Pancreas (tissue), 10 donors: ENCODE measurements at regions of chr1 and their contacts with region 1.

Region 1: DNA sequence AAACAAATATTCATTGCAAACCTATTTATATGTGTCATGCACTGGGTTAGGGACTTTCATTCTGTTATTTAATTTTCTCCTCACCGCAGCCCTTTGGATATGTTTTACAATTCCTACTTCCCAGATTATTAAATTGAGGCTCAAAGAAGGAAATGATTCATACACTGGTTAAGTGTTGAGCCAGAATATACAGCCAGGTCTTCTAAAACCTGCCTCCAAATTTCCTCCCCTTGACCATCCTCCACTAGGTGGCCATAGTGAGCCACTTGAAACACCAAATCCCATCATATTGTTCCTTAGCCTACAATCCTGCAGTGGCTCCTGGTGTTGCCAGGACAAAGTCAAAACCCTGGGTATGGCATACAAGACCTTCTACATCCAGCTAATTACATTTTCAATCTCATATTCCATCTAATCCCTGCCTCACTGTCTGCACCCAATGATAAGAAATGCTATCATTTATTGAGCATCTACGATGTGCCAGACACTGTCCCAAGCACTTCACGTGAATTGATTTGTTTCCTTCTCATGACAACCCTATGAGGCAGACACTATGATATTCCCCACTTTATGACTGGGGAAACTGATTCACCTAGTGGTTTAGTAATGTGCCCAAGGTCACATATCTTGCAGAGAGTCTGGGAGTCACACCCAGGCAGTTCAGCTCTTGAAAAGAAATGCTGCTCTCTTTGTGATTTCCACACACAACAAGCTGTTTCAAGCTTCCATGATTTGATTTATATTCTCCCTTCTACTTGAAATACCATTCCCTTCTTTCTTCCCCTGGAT is 23.6 kb upstream of the KIRREL1 start:
- DNase-seq: peak in 1 of 6 donors; percentile 30
- ATAC-seq: peak in 3 of 4 donors; percentile 27 to 68 (median 58)
- H3K4me3 ChIP-seq: no peak overlapping the region
- H3K27ac ChIP-seq: peak overlapping the region in 2 of 4 donors; percentile 25 to 53
- H3K4me1 ChIP-seq: peaks cover 0 to 15% (median 13%) of the 10 kb centered on the region in 3 donors
- H3K27me3 ChIP-seq: no peaks in the 10 kb centered on the region
- CTCF ChIP-seq: peak in 3 of 4 donors; percentile 25 to 43 (median 40)

Region 2: GRCh38 chr1:158117854-158118704 is 148.2 kb after region 1 on chr1:
- intact Hi-C with region 1: loop called in 1 of 3 experiments (anchors 10 kb)
- DNase-seq: peak in 3 of 6 donors; percentile 19 to 59 (median 33)
- ATAC-seq: peak; percentile 21 to 85 (median 62)
- H3K4me3 ChIP-seq: peak overlapping the region in 1 of 4 donors; percentile 18
- H3K27ac ChIP-seq: no peak overlapping the region
- H3K4me1 ChIP-seq: no peaks in the 10 kb centered on the region
- H3K27me3 ChIP-seq: peaks cover 0 to 7% (median 0%) of the 10 kb centered on the region in 4 donors
- CTCF ChIP-seq: peak in 3 of 4 donors; percentile 16 to 31 (median 19)